CD14-positive monocyte (primary cell): ENCODE measurements at regions of chr5 and their contacts with region 1.

Region 1: DNA sequence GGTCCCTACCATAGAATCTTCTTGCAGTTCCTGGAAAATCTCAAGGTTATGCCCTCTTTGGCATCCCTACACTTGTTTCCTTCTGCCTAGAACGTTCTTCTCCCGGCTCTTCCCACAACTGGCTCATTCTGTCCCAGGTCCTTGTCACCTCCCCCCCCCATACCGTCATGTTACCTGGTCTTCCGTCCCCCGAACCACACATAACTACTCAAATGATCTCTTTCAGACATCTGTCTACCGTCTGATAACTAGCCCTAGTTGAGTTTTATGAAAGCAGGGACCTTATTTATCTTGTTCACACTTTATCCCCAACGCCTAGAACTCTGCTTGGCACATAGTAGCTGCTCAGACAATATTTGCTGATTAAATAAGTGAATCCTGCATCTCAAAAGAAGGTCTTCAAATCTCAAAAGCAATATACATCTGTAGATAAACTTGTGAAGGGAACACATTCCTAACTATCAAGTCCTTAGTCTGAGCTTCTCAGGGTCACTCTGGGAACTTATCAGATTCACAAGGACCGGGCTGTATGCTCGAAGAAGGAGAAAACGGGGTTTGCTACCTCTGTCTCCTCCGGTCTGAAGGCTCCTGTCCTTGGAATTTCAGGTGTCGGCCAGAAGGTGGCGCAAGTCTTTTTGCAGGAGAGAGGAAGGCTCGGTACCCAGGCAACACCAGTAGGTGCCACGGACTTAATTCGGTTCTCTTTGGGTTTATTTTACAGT is 30.0 kb downstream of the LCP2 start:
- DNase-seq: peak; percentile 77 to 83 (median 79)
- H3K4me3 ChIP-seq: no peak overlapping the region
- H3K4me3 Mint-ChIP-seq: peak overlapping the region in 1 of 2 donors; percentile 24
- H3K27ac ChIP-seq: peak overlapping the region in 1 of 2 donors; percentile 97
- H3K27ac Mint-ChIP-seq: peak overlapping the region; percentile 76 to 100 (median 98)
- H3K4me1 ChIP-seq: peaks cover 47 to 48% of the 10 kb centered on the region in 2 donors
- H3K4me1 Mint-ChIP-seq: peaks cover 49% of the 10 kb centered on the region
- H3K27me3 ChIP-seq: no peaks in the 10 kb centered on the region
- H3K27me3 Mint-ChIP-seq: peaks cover 0 to 1% (median 0%) of the 10 kb centered on the region in 3 donors
- CTCF ChIP-seq: peak; percentile 83

Region 2: DNA sequence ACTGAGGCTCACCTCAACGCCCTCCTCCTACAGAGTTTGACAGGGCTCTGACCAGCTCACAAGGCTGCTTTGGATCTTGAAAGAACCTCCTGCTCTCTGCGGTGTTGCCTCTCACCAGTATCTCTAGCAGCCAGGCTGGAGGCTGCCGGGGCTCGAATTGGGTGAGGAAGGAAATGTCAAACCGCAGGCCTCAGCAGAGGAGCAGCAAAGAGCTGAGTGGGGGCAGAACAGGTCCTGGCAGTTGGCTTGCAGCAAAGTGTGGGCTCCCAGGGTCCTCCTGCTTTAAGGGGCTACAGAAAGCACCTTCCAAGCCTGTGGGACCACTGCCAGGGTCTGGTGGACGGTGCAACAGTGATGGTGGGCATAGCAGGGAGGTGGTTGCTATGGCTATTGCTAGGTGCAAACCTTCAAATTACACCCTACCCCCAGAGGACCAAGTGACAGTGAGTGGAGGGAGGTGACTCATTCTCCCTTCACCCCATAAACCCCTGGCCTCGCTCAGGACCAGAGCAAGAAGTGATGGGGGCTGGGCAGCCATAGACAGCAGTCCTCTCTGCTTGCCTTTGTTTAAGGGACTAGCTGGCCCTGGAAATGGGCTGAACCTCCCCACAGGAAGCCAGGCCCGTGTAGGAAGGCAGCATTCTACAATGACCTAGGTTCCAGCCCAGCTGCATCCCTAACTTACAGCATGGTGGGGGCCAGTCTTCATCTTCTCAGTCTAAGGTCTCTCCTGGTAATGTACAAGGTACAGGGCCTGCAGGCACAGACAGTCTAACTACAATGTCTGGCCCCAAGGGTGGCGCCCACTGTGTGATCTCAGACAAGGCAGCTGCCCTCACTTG is 11.2 kb after region 1 on chr5:
- intact Hi-C with region 1: loop called in 1 of 2 experiments (anchors 1 kb)
- DNase-seq: peak; percentile 83 to 87 (median 84)
- H3K4me3 ChIP-seq: peak overlapping the region in 1 of 3 experiments; percentile 58
- H3K4me3 Mint-ChIP-seq: peak overlapping the region; percentile 73 to 87
- H3K27ac ChIP-seq: peak overlapping the region; percentile 91 to 92
- H3K27ac Mint-ChIP-seq: peak overlapping the region; percentile 93 to 99 (median 98)
- H3K4me1 ChIP-seq: peaks cover 76 to 84% of the 10 kb centered on the region in 2 donors
- H3K4me1 Mint-ChIP-seq: peaks cover 89% of the 10 kb centered on the region
- H3K27me3 ChIP-seq: no peaks in the 10 kb centered on the region
- H3K27me3 Mint-ChIP-seq: no peaks in the 10 kb centered on the region
- CTCF ChIP-seq: no peak

Region 3: GRCh38 chr5:170302653-170303501 is 35.3 kb after region 1 on chr5:
- intact Hi-C with region 1: loop called in 1 of 2 experiments (anchors 5 kb)
- DNase-seq: peak; percentile 81 to 89 (median 86)
- H3K4me3 ChIP-seq: peak overlapping the region in 2 of 3 experiments; percentile 1 to 54
- H3K4me3 Mint-ChIP-seq: peak overlapping the region; percentile 68 to 84
- H3K27ac ChIP-seq: peak overlapping the region; percentile 88 to 93
- H3K27ac Mint-ChIP-seq: peak overlapping the region; percentile 93 to 100 (median 96)
- H3K4me1 ChIP-seq: peaks cover 73 to 81% of the 10 kb centered on the region in 2 donors
- H3K4me1 Mint-ChIP-seq: peaks cover 82% of the 10 kb centered on the region
- H3K27me3 ChIP-seq: no peaks in the 10 kb centered on the region
- H3K27me3 Mint-ChIP-seq: peaks cover 0 to 3% (median 1%) of the 10 kb centered on the region in 3 donors
- CTCF ChIP-seq: no peak

Region 4: DNA sequence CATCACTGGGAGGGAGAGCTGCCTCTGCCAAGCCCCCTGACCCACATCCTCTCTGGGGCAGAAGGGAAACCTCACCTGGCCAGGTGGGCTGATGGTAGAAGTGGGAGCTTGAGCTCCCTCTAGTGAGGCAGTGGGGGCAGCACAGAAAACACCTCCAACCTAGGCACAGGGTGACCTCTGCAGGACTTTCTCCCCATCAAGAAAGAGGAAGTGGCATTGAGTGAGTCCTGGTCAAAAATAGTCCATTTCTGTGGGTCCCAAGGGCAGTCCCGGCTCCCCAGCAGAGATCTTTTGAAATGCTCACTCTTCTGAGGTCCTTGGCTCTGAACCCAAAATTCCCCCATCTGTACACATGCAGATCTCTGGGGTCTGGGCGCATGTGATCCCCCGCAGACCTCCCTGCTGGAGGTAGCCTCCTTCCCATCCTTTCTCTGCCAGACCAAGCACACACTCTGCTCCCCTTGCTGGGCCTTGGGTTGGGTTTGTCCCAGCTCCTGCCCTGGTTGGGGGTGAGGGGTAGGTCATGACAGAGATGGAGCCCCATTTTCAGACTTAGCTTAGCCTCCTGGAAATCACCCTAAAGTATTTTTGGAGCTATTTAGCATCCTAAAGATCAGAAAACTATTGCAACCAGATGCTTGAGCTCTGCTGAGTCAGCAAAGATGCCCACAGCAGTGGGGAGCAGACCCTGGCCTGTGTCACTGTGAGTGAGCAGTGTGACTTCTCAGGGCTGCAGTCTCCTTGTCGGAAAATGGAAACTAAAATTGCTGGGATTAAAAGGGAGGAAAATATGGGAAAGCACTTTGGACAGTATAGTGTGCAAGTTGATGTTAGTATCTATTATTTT is 71.6 kb after region 1 on chr5:
- intact Hi-C with region 1: loop called (anchors 5 kb)
- DNase-seq: peak in 2 of 3 donors; percentile 76 to 83
- H3K4me3 ChIP-seq: no peak overlapping the region
- H3K4me3 Mint-ChIP-seq: no peak overlapping the region
- H3K27ac ChIP-seq: peak overlapping the region in 1 of 2 donors; percentile 39
- H3K27ac Mint-ChIP-seq: peak overlapping the region; percentile 3 to 89 (median 63)
- H3K4me1 ChIP-seq: peaks cover 62 to 66% of the 10 kb centered on the region in 2 donors
- H3K4me1 Mint-ChIP-seq: peaks cover 62% of the 10 kb centered on the region
- H3K27me3 ChIP-seq: no peaks in the 10 kb centered on the region
- H3K27me3 Mint-ChIP-seq: peaks cover 0 to 9% (median 3%) of the 10 kb centered on the region in 3 donors
- CTCF ChIP-seq: peak; percentile 84

Region 5: DNA sequence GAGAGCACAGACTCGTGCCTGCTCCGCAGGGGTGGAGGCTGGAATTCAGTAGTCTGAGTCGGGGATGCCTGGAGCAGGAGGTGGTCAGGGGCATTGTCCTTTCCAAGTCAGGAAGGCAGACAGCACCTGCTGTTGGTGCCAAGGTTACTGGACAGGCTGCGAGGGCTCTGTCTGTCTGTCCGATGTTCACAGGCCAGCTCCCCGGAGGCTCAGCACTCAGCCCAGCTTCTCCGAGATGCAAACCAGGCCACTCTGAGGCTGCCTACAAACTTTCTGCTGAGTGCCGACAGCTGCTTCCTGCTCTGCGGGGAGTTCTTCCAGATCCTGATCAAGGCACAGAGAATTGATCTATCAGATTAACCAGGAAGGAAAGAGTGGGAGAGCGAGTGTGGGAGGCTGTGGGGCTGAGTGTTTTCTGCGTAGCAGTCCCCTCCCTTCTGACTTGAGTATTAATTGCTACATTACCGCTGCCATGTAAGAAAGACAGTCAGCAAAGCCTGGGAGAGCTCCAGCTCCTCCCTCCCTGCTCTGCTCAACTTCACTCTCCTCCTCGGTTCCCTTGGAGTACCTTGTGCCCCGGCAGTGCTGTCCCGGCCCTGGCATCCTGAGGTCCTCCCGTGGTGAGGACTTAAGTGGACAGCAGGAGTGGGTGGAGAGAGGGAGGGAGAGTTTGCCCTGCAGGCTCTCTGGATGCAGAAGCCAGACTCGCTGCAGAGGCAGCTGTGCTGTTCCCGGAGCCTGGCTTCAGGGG is 85.6 kb after region 1 on chr5:
- intact Hi-C with region 1: loop called in 1 of 2 experiments (anchors 5 kb)
- DNase-seq: no peak
- H3K4me3 ChIP-seq: peak overlapping the region in 1 of 3 experiments; percentile 33
- H3K4me3 Mint-ChIP-seq: peak overlapping the region; percentile 17 to 82
- H3K27ac ChIP-seq: no peak overlapping the region
- H3K27ac Mint-ChIP-seq: peak overlapping the region; percentile 30 to 66 (median 43)
- H3K4me1 ChIP-seq: peaks cover 47 to 49% of the 10 kb centered on the region in 2 donors
- H3K4me1 Mint-ChIP-seq: peaks cover 61% of the 10 kb centered on the region
- H3K27me3 ChIP-seq: no peaks in the 10 kb centered on the region
- H3K27me3 Mint-ChIP-seq: peaks cover 0 to 2% (median 1%) of the 10 kb centered on the region in 3 donors
- CTCF ChIP-seq: no peak

Region 6: GRCh38 chr5:170404402-170404801 is 136.8 kb after region 1 on chr5:
- intact Hi-C with region 1: loop called in 1 of 2 experiments (anchors 5 kb)
- DNase-seq: peak; percentile 93 to 96 (median 95)
- H3K4me3 ChIP-seq: no peak overlapping the region
- H3K4me3 Mint-ChIP-seq: no peak overlapping the region
- H3K27ac ChIP-seq: peak overlapping the region; percentile 14 to 60
- H3K27ac Mint-ChIP-seq: peak overlapping the region; percentile 70 to 94 (median 89)
- H3K4me1 ChIP-seq: peaks cover 26 to 29% of the 10 kb centered on the region in 2 donors
- H3K4me1 Mint-ChIP-seq: peaks cover 32% of the 10 kb centered on the region
- H3K27me3 ChIP-seq: no peaks in the 10 kb centered on the region
- H3K27me3 Mint-ChIP-seq: peaks cover 0 to 4% (median 2%) of the 10 kb centered on the region in 3 donors
- CTCF ChIP-seq: no peak

Region 7: DNA sequence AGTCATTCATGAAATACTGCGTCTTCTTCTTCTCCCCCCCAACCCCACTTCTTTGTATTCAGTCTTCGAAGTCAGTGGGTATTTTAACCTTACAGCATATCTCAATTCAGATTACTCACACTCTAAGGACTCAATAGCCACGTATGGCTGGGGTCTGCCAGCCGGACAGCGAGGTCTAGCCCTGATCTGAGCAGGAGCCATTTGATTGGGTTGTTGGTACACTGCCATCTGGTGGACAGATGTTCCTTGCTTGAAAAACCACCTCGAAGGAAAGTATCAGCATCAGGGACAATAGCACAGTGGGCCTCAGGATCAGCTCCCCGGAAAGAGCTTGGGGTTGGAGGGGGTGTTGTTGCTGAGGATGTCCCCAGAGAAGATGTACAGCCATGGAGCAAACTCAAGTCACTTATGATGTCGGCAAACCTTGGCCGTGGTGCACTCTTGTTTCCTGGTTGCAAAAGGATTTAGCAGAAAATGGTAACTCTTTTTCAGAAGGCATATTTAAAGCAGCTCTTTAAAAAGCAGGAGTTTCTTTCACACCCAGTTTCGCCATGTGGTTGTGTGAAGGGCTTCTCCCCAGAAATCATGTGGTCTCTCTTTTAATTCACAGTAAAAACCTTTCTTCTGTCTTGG is 153.3 kb after region 1 on chr5:
- intact Hi-C with region 1: loop called (anchors 5 kb)
- DNase-seq: peak; percentile 69 to 82 (median 80)
- H3K4me3 ChIP-seq: no peak overlapping the region
- H3K4me3 Mint-ChIP-seq: no peak overlapping the region
- H3K27ac ChIP-seq: no peak overlapping the region
- H3K27ac Mint-ChIP-seq: peak overlapping the region in 2 of 7 donors; percentile 9 to 78
- H3K4me1 ChIP-seq: peaks cover 4% of the 10 kb centered on the region in 2 donors
- H3K4me1 Mint-ChIP-seq: peaks cover 19% of the 10 kb centered on the region
- H3K27me3 ChIP-seq: no peaks in the 10 kb centered on the region
- H3K27me3 Mint-ChIP-seq: peaks cover 0 to 3% (median 2%) of the 10 kb centered on the region in 3 donors
- CTCF ChIP-seq: peak; percentile 82

Region 8: DNA sequence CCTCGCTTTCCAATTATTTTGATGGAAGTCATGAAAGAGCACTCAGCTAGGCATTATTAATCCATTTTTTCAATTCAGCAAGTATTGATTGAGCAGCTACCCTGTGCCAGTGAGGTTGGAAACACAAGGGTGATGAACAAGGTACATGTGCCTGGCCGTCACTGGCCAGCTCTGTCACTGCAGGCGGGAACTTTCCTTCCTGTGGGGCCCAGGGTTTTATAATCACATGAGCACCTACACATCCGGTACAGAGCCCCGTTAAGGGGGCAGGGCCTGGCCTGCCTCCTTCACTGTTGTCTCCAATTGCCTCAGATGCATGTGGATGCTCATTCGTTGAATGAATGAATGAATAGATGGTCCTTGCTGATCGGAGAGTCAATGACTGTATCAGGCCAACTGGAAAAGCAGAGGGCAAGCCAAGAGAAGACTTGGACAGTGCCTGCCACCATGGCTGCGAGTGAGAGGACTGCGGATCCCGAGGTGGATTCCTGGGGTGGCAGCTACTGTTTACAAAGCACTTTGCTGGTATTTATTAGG is 177.4 kb after region 1 on chr5:
- intact Hi-C with region 1: no loop called
- DNase-seq: no peak
- H3K4me3 ChIP-seq: no peak overlapping the region
- H3K4me3 Mint-ChIP-seq: no peak overlapping the region
- H3K27ac ChIP-seq: no peak overlapping the region
- H3K27ac Mint-ChIP-seq: no peak overlapping the region
- H3K4me1 ChIP-seq: no peaks in the 10 kb centered on the region
- H3K4me1 Mint-ChIP-seq: peaks cover 5% of the 10 kb centered on the region
- H3K27me3 ChIP-seq: no peaks in the 10 kb centered on the region
- H3K27me3 Mint-ChIP-seq: peaks cover 0 to 5% (median 0%) of the 10 kb centered on the region in 3 donors
- CTCF ChIP-seq: no peak

Region 9: GRCh38 chr5:170552621-170553115 is 285.1 kb after region 1 on chr5:
- intact Hi-C with region 1: no loop called
- DNase-seq: no peak
- H3K4me3 ChIP-seq: no peak overlapping the region
- H3K4me3 Mint-ChIP-seq: no peak overlapping the region
- H3K27ac ChIP-seq: no peak overlapping the region
- H3K27ac Mint-ChIP-seq: no peak overlapping the region
- H3K4me1 ChIP-seq: peaks cover 9 to 10% of the 10 kb centered on the region in 2 donors
- H3K4me1 Mint-ChIP-seq: no peaks in the 10 kb centered on the region
- H3K27me3 ChIP-seq: peaks cover 30 to 48% of the 10 kb centered on the region in 2 donors
- H3K27me3 Mint-ChIP-seq: peaks cover 8 to 34% (median 11%) of the 10 kb centered on the region in 3 donors
- CTCF ChIP-seq: no peak